HepG2 (cell line): ENCODE measurements at regions of chr16 and their contacts with region 1.

Region 1: GRCh38 chr16:25707982-25708583 is 16.3 kb downstream of the HS3ST4 start:
- DNase-seq: peak; percentile 53
- ATAC-seq: peak; percentile 57; the same call in 2 of the 3 replicates
- H3K4me3 ChIP-seq: no peak overlapping the region
- H3K27ac ChIP-seq: no peak overlapping the region
- H3K4me1 ChIP-seq: no peaks in the 10 kb centered on the region
- H3K27me3 ChIP-seq: 0 out of 5 replicates have a peak, but pooled peaks cover 0 to 2% of the 10 kb centered on the region in 2 experiments
- CTCF ChIP-seq: peak; percentile 76
- EP300 ChIP-seq: no peak
- POLR2A ChIP-seq: no peak
- RAD21 ChIP-seq: peak; percentile 18; the same call in 1 of the 2 replicates

Region 2: DNA sequence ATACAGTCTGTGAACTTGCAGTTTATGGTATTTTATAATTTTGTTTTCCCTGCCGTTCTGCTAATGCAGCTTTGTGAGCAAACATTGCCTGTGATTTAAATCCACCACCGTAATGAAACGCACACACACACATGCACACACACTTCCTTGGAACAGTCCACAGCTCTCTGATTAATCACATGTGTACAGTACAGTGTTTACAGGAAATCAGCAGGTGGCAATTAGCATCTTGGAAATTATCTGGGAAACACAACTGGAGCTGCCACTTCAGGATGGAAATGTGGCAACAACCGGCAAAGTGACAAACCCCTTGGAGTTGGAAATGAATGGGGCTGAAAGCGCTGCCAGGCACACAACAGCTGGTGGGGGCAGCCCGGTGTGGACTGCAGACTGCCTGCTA is 437.5 kb before region 1 on chr16:
- CTCF ChIA-PET with region 1: no interaction called
- POLR2A ChIA-PET with region 1: no interaction called
- in situ Hi-C with region 1: loop called (anchors 10 kb)
- intact Hi-C with region 1: no loop called
- DNase-seq: no peak
- ATAC-seq: no peak
- H3K4me3 ChIP-seq: no peak overlapping the region
- H3K27ac ChIP-seq: no peak overlapping the region
- H3K4me1 ChIP-seq: no peaks in the 10 kb centered on the region
- H3K27me3 ChIP-seq: no peaks in the 10 kb centered on the region
- CTCF ChIP-seq: no peak
- EP300 ChIP-seq: no peak
- POLR2A ChIP-seq: no peak
- RAD21 ChIP-seq: no peak

Region 3: GRCh38 chr16:25279491-25279890 is 428.6 kb before region 1 on chr16:
- CTCF ChIA-PET with region 1: interaction called, 16 read pairs
- POLR2A ChIA-PET with region 1: no interaction called
- in situ Hi-C with region 1: loop called (anchors 10 kb)
- intact Hi-C with region 1: loop called (anchors 1 kb)
- DNase-seq: no peak
- ATAC-seq: no peak
- H3K4me3 ChIP-seq: no peak overlapping the region
- H3K27ac ChIP-seq: no peak overlapping the region
- H3K4me1 ChIP-seq: no peaks in the 10 kb centered on the region
- H3K27me3 ChIP-seq: no peaks in the 10 kb centered on the region
- CTCF ChIP-seq: no peak
- EP300 ChIP-seq: no peak
- POLR2A ChIP-seq: no peak
- RAD21 ChIP-seq: no peak